Naive thymus-derived CD4-positive, alpha-beta T cell (primary cell): ENCODE measurements at regions of chr1 and their contacts with region 1.

Region 1: GRCh38 chr1:6889875-6890480 is 104.7 kb downstream of the CAMTA1 start:
- DNase-seq: peak in 6 of 9 donors; percentile 22 to 43 (median 29)
- ATAC-seq: peak; percentile 69
- H3K4me3 ChIP-seq: no peak overlapping the region
- H3K4me3 Mint-ChIP-seq: no peak overlapping the region
- H3K27ac ChIP-seq: no peak overlapping the region
- H3K27ac Mint-ChIP-seq: no peak overlapping the region
- H3K4me1 ChIP-seq: no peaks in the 10 kb centered on the region
- H3K4me1 Mint-ChIP-seq: peaks cover 0 to 5% (median 0%) of the 10 kb centered on the region in 7 donors
- H3K27me3 ChIP-seq: no peaks in the 10 kb centered on the region
- H3K27me3 Mint-ChIP-seq: no peaks in the 10 kb centered on the region

Region 2: DNA sequence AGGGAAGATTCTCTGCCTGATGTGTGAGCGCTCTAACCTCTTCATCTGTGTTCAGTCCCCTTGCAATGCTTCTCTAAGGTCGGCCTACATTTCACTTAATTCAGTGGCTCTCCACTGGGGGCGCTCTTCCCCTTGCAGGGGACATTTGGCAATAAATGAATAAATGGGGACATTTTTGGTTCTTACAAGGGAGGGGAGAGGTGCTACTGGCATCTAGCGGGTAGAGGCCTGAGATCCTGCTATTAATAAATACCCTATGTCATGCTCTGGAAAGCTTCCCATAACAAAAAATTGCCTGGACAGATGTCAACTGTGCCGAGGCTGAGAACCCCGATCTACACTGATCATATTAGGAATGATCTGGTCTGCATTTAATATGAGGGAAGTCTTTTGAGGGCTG is 162.4 kb before region 1 on chr1:
- CTCF ChIA-PET with region 1: no interaction called
- POLR2A ChIA-PET with region 1: no interaction called
- intact Hi-C with region 1: loop called in 1 of 2 experiments (anchors 1 kb)
- DNase-seq: peak in 7 of 9 donors; percentile 36 to 60 (median 51)
- ATAC-seq: peak; percentile 74
- H3K4me3 ChIP-seq: no peak overlapping the region
- H3K4me3 Mint-ChIP-seq: no peak overlapping the region
- H3K27ac ChIP-seq: no peak overlapping the region
- H3K27ac Mint-ChIP-seq: peak overlapping the region in 1 of 9 donors; percentile 25
- H3K4me1 ChIP-seq: no peaks in the 10 kb centered on the region
- H3K4me1 Mint-ChIP-seq: no peaks in the 10 kb centered on the region
- H3K27me3 ChIP-seq: no peaks in the 10 kb centered on the region
- H3K27me3 Mint-ChIP-seq: peaks cover 6 to 10% (median 6%) of the 10 kb centered on the region in 5 donors

Region 3: GRCh38 chr1:6794164-6794563 is 95.8 kb before region 1 on chr1:
- CTCF ChIA-PET with region 1: no interaction called
- POLR2A ChIA-PET with region 1: no interaction called
- intact Hi-C with region 1: loop called (anchors 1 kb)
- DNase-seq: peak in 6 of 9 donors; percentile 5 to 53 (median 42)
- ATAC-seq: no peak
- H3K4me3 ChIP-seq: no peak overlapping the region
- H3K4me3 Mint-ChIP-seq: no peak overlapping the region
- H3K27ac ChIP-seq: no peak overlapping the region
- H3K27ac Mint-ChIP-seq: no peak overlapping the region
- H3K4me1 ChIP-seq: peaks cover 0 to 4% of the 10 kb centered on the region in 2 donors
- H3K4me1 Mint-ChIP-seq: peaks cover 13 to 62% (median 56%) of the 10 kb centered on the region in 7 donors
- H3K27me3 ChIP-seq: no peaks in the 10 kb centered on the region
- H3K27me3 Mint-ChIP-seq: no peaks in the 10 kb centered on the region

Region 4: GRCh38 chr1:6906783-6907182 is 16.8 kb after region 1 on chr1:
- CTCF ChIA-PET with region 1: no interaction called
- POLR2A ChIA-PET with region 1: no interaction called
- intact Hi-C with region 1: no loop called
- DNase-seq: no peak
- ATAC-seq: no peak
- H3K4me3 ChIP-seq: no peak overlapping the region
- H3K4me3 Mint-ChIP-seq: no peak overlapping the region
- H3K27ac ChIP-seq: no peak overlapping the region
- H3K27ac Mint-ChIP-seq: no peak overlapping the region
- H3K4me1 ChIP-seq: no peaks in the 10 kb centered on the region
- H3K4me1 Mint-ChIP-seq: peaks cover 0 to 21% (median 5%) of the 10 kb centered on the region in 7 donors
- H3K27me3 ChIP-seq: peaks cover 0 to 7% of the 10 kb centered on the region in 2 donors
- H3K27me3 Mint-ChIP-seq: peaks cover 0 to 7% (median 0%) of the 10 kb centered on the region in 5 donors